Activated B cell treated with CpG ODN at 0.5 μM for 24 hours (primary cell): ENCODE measurements at regions of chr19 and their contacts with region 1.

Region 1: DNA sequence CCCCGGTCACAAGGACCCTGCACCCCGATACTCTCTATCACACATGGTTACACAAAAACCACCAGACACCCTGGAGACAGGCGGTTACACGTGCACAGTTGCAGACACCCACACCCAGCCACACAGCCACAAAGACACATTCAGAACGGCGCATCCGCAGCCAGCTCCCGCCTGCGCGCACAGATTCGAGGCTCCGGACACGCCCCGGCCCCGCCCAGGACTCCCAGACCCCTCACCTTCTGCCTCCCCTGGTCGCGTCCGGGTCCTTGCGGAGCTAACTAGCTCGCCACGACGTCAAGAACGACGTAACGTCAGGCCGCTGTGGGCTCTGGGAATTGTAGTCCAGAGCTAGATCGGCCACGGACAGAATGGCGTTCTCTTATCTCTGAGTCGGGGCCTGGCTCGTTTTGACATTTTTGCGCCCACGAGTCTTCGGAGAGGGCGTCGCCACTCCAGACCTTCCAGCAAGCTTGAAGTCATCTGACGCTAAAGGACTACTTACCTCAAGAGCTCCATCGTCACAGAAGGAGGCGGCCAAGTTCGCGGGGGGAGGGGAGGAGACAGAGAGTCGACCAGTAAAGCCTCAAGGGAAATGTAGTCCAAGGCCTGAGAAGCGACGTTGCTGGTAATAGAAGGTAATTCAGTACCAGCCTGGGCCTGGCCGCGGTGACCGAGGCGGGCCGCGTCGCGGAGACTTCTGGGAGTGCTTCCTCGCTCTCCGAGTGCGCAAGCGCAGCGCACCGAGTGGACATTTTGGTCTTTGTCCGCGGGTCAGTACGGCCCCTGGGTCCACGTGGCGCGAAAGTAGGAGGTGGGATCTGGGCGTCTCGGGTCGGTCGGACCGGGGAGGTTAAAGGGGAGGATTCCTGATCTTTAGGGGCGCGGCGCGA is at the starts of genes ZNF146 and ZNF565:
- DNase-seq: peak; percentile 90
- ATAC-seq: peak; percentile 90
- H3K4me3 Mint-ChIP-seq: no peak within 1 kb of the TSS
- H3K27ac Mint-ChIP-seq: no peak within 1 kb of the TSS
- H3K4me1 Mint-ChIP-seq: peaks cover 29% of the 10 kb centered on the region
- H3K27me3 Mint-ChIP-seq: no peaks in the 10 kb centered on the region
- CTCF ChIP-seq: no peak
- total RNA-seq, gene ZNF146: 57.8 and 63.2 TPM in 2 replicates
- total RNA-seq, gene ZNF565: 2.3 and 3.2 TPM in 2 replicates

Region 2: GRCh38 chr19:36132489-36132891 is 82.1 kb before region 1 on chr19:
- CTCF ChIA-PET with region 1: interaction called, 4 read pairs
- POLR2A ChIA-PET with region 1: interaction called, 17 read pairs
- intact Hi-C with region 1: loop called (anchors 1 kb)
- DNase-seq: no peak
- ATAC-seq: no peak
- H3K4me3 Mint-ChIP-seq: no peak overlapping the region
- H3K27ac Mint-ChIP-seq: no peak overlapping the region
- H3K4me1 Mint-ChIP-seq: peaks cover 18% of the 10 kb centered on the region
- H3K27me3 Mint-ChIP-seq: peaks cover 2% of the 10 kb centered on the region
- CTCF ChIP-seq: no peak

Region 3: DNA sequence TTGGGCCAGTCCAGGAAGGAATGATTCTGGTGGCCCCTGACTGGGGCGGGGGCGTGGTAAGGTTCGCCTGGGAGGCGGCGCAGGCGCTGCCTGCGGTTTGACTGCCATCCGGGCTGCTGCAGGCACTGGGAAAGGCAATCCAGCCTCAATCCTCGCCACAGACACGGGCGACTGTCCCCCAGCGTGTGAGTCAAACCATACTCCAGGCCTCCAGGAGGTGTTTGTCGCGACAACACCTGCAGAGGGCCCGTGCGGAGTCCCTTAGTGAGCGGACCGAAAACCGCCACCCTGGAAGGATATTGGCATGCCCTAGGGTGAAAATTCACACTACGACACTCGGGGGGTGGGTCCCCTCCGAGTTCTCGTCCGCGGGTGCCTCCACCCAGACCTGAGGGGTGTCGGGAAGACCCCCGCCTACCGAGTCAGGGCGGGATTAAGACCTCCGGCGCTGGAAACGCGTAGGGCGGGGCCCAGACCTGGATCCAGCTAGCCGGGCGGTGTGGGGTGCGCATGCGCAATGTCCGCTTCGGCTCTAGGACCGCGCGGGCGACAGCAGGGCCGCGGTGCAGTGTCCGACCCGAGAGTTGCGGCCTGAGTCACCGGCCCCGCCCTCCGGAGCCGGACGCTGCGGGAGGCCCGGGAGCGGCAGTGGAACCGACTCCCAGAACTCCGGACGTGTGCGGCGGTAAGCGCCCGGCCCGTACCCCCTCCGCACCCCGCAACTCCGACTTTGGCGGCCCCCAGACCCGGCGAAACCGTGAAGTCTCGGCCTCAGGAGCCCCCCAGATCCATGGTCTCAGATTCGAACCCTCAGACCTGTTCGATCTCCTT is 74.9 kb before region 1 on chr19 and contains the start of gene CAPNS1:
- CTCF ChIA-PET with region 1: no interaction called
- POLR2A ChIA-PET with region 1: interaction called, 13 read pairs
- intact Hi-C with region 1: no loop called
- DNase-seq: peak; percentile 93
- ATAC-seq: peak; percentile 76
- H3K4me3 Mint-ChIP-seq: peak within 1 kb of the TSS; percentile 97
- H3K27ac Mint-ChIP-seq: peak within 1 kb of the TSS; percentile 97
- H3K4me1 Mint-ChIP-seq: peaks cover 16% of the 10 kb centered on the region
- H3K27me3 Mint-ChIP-seq: peaks cover 2% of the 10 kb centered on the region
- CTCF ChIP-seq: no peak
- total RNA-seq, gene CAPNS1: 442 and 477 TPM in 2 replicates

Region 4: GRCh38 chr19:36245210-36246005 is 30.8 kb after region 1 on chr19:
- CTCF ChIA-PET with region 1: no interaction called
- POLR2A ChIA-PET with region 1: no interaction called
- intact Hi-C with region 1: no loop called
- DNase-seq: no peak
- ATAC-seq: no peak
- H3K4me3 Mint-ChIP-seq: no peak overlapping the region
- H3K27ac Mint-ChIP-seq: no peak overlapping the region
- H3K4me1 Mint-ChIP-seq: peaks cover 8% of the 10 kb centered on the region
- H3K27me3 Mint-ChIP-seq: peaks cover 4% of the 10 kb centered on the region
- CTCF ChIP-seq: no peak

Region 5: DNA sequence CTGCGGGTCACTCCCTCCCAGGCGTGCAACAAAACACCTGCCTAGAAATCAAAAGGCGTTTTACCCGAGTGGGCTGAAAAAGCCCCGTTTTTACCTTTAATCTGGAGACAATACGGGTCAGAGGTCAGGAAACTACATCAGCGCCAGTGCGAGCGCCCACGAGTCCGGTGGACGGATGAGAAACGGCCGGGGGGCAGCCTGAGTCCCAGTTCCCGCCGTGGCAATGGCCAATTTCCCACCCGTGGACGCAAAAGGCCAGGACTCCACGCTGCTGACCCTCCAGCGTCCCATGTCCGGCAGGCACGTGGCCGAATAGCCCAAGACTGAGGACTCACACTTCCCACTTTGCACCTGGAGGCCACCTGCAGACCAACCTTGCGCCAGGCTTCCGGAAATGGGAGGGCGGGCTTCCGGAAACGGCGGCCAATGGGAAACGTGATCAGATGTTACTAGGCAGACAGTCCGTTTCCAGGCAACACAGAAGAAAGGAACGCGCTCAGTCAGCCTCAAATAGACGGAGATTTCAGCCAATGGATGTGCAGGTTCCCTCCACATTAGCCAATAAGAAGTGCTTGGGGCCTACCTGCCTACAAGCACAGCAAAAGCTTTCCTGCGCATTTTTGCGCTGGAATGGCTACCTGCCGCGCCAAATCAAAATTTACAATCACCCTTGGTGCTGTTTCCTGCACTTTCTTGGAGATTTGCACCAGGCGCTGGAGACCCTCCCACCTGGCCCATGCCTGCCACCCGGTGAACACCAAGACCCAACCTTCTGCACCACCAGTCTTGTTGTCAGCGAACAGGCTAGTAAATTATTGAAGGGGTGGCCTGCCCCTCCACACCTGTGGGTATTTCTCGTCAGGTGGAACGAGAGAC is 117.0 kb after region 1 on chr19:
- CTCF ChIA-PET with region 1: no interaction called
- POLR2A ChIA-PET with region 1: no interaction called
- intact Hi-C with region 1: loop called (anchors 1 kb)
- DNase-seq: peak; percentile 78
- ATAC-seq: peak; percentile 99
- H3K4me3 Mint-ChIP-seq: peak overlapping the region; percentile 86
- H3K27ac Mint-ChIP-seq: peak overlapping the region; percentile 76
- H3K4me1 Mint-ChIP-seq: peaks cover 26% of the 10 kb centered on the region
- H3K27me3 Mint-ChIP-seq: no peaks in the 10 kb centered on the region
- CTCF ChIP-seq: no peak

Region 6: DNA sequence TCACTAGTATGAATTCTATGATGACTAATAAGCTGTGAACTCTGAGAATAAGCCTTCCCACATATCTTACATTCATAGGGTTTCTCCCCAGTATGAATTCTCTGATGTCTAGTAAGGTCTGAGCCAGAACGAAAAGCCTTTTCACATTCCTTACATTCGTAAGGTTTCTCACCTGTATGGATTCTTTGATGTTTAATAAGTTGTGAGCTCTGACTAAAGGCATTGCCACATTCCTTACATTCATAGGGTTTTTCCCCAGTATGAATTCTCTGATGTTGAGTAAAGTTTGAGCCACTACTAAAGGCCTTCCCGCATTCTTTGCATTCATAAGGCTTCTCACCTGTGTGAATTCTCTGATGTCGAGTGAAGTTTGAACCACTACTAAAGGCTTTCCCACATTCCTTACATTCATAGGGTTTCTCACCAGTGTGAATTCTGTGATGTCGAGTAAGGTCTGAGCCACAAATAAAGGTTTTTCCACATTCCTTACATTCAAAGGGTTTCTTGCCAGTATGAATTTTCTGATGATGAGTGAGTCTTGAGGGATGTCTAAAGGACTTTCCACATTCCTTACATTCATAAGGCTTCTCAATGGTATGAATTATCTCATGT is 234.5 kb after region 1 on chr19:
- CTCF ChIA-PET with region 1: no interaction called
- POLR2A ChIA-PET with region 1: no interaction called
- intact Hi-C with region 1: no loop called
- DNase-seq: no peak
- ATAC-seq: no peak
- H3K4me3 Mint-ChIP-seq: no peak overlapping the region
- H3K27ac Mint-ChIP-seq: no peak overlapping the region
- H3K4me1 Mint-ChIP-seq: no peaks in the 10 kb centered on the region
- H3K27me3 Mint-ChIP-seq: no peaks in the 10 kb centered on the region
- CTCF ChIP-seq: no peak

Region 7: GRCh38 chr19:36528194-36528920 is 313.7 kb after region 1 on chr19 and contains the start of gene ZNF260:
- CTCF ChIA-PET with region 1: no interaction called
- POLR2A ChIA-PET with region 1: interaction called, 16 read pairs
- intact Hi-C with region 1: loop called (anchors 1 kb)
- DNase-seq: peak; percentile 94
- ATAC-seq: peak; percentile 89
- H3K4me3 Mint-ChIP-seq: peak within 1 kb of the TSS; percentile 99
- H3K27ac Mint-ChIP-seq: peak within 1 kb of the TSS; percentile 99
- H3K4me1 Mint-ChIP-seq: peaks cover 27% of the 10 kb centered on the region
- H3K27me3 Mint-ChIP-seq: no peaks in the 10 kb centered on the region
- CTCF ChIP-seq: no peak
- total RNA-seq, gene ZNF260: 9.8 and 13.6 TPM in 2 replicates